Activated CD8-positive, alpha-beta T cell treated with anti-CD3 and anti-CD28 coated beads for 36 hours (primary cell): ENCODE measurements at regions of chr1 and their contacts with region 1.

Region 1: GRCh38 chr1:246506674-246507481 is at the start of gene SMYD3:
- DNase-seq: peak; percentile 75
- ATAC-seq: peak; percentile 97
- H3K4me3 Mint-ChIP-seq: peak within 1 kb of the TSS; percentile 84
- H3K27ac Mint-ChIP-seq: peak within 1 kb of the TSS; percentile 91
- H3K4me1 Mint-ChIP-seq: peaks cover 24% of the 10 kb centered on the region
- H3K27me3 Mint-ChIP-seq: no peaks in the 10 kb centered on the region
- CTCF ChIP-seq: no peak
- total RNA-seq, gene SMYD3: 22.6 to 24.6 TPM

Region 2: GRCh38 chr1:246566128-246566812 is 59.4 kb after region 1 on chr1 and contains the starts of genes CNST and TFB2M:
- CTCF ChIA-PET with region 1: interaction called, 5 read pairs
- POLR2A ChIA-PET with region 1: interaction called, 5 read pairs
- intact Hi-C with region 1: loop called (anchors 5 kb)
- DNase-seq: peak; percentile 97
- ATAC-seq: peak; percentile 88
- H3K4me3 Mint-ChIP-seq: peak within 1 kb of the TSS; percentile 99
- H3K27ac Mint-ChIP-seq: peak within 1 kb of the TSS; percentile 98
- H3K4me1 Mint-ChIP-seq: peaks cover 40% of the 10 kb centered on the region
- H3K27me3 Mint-ChIP-seq: no peaks in the 10 kb centered on the region
- CTCF ChIP-seq: no peak
- total RNA-seq, gene CNST: 23.5 to 25.1 TPM
- total RNA-seq, gene TFB2M: 16.0 TPM

Region 3: GRCh38 chr1:246748880-246749279 is 242.0 kb after region 1 on chr1:
- CTCF ChIA-PET with region 1: no interaction called
- POLR2A ChIA-PET with region 1: no interaction called
- intact Hi-C with region 1: no loop called
- DNase-seq: no peak
- ATAC-seq: no peak
- H3K4me3 Mint-ChIP-seq: no peak overlapping the region
- H3K27ac Mint-ChIP-seq: no peak overlapping the region
- H3K4me1 Mint-ChIP-seq: no peaks in the 10 kb centered on the region
- H3K27me3 Mint-ChIP-seq: no peaks in the 10 kb centered on the region
- CTCF ChIP-seq: no peak